AG04449 (cell line): ENCODE measurements at regions of chr15 and their contacts with region 1.

Region 1: GRCh38 chr15:93035953-93036800 is 52.8 kb downstream of the RGMA start:
- DNase-seq: no peak
- H3K4me3 ChIP-seq: no peak overlapping the region
- CTCF ChIP-seq: peak; percentile 61

Region 2: GRCh38 chr15:92772626-92773244 is 263.4 kb before region 1 on chr15:
- CTCF ChIA-PET with region 1: no interaction called
- POLR2A ChIA-PET with region 1: no interaction called
- DNase-seq: no peak
- H3K4me3 ChIP-seq: no peak overlapping the region
- CTCF ChIP-seq: no peak

Region 3: GRCh38 chr15:93048759-93049161 is 12.6 kb after region 1 on chr15:
- CTCF ChIA-PET with region 1: interaction called, 16 read pairs
- POLR2A ChIA-PET with region 1: no interaction called
- DNase-seq: no peak
- H3K4me3 ChIP-seq: no peak overlapping the region
- CTCF ChIP-seq: no peak

Region 4: GRCh38 chr15:94125156-94125555 is 1089.0 kb after region 1 on chr15:
- CTCF ChIA-PET with region 1: interaction called, 184 read pairs
- POLR2A ChIA-PET with region 1: no interaction called
- DNase-seq: peak; percentile 7
- H3K4me3 ChIP-seq: no peak overlapping the region
- CTCF ChIP-seq: no peak